ENCODE measurements at regions of chr14 and their contacts with region 1.

Region 1: GRCh38 chr14:80987235-80988032 is 32.0 kb downstream of the TSHR start:
- DNase-seq: peak; percentile 17
- H3K4me3 ChIP-seq: no peak overlapping the region
- H3K27me3 ChIP-seq: 0 out of 2 replicates have a peak, but pooled peaks cover 5% of the 10 kb centered on the region
- CTCF ChIP-seq: peak; percentile 95

Region 2: GRCh38 chr14:80954687-80955299 is 32.6 kb before region 1 on chr14:
- CTCF ChIA-PET with region 1: interaction called, 83 read pairs
- POLR2A ChIA-PET with region 1: no interaction called
- DNase-seq: peak; percentile 26
- H3K4me3 ChIP-seq: peak overlapping the region; percentile 49
- H3K27me3 ChIP-seq: peaks cover 15% of the 10 kb centered on the region
- CTCF ChIP-seq: peak; percentile 81

Region 3: GRCh38 chr14:80973931-80974641 is 13.3 kb before region 1 on chr14:
- CTCF ChIA-PET with region 1: interaction called, 34 read pairs
- POLR2A ChIA-PET with region 1: interaction called, 3 read pairs
- DNase-seq: no peak
- H3K4me3 ChIP-seq: no peak overlapping the region
- H3K27me3 ChIP-seq: 0 out of 2 replicates have a peak, but pooled peaks cover 1% of the 10 kb centered on the region
- CTCF ChIP-seq: no peak

Region 4: DNA sequence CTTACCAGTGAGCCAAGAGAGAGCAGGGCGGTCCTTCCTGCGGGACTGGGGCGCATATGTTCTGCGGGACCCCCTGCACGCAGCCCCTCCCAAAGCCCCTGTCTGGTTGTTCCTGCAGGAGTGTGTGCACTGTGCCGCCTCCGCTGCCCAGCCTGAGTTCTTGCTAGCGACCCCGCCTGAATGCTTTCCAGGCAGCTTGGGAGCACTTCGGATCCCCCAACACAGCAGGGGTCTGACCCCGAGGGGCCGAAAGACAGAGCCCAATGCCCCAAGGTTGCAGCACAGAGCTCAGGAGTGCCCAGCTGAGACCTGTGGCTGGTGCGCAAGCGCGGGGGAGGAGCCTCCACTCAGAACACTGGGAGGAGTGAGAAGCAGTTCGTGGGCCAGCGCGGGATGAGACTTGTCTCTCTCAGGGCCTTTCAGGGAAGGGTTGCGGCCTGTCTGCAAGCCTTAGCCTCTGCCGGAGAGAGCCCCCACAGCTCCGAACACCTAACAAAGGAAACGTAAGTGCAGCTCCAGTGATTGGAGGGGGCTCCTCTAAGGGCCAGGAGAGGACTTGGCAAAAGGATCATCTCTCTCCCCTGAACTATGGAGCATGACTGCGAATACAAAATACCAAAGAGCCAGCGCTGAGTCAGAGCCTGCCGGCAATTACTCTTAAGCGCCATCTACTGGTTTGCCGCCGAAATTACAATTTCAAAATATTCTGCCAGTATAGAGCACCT is 182.8 kb after region 1 on chr14:
- CTCF ChIA-PET with region 1: interaction called, 15 read pairs
- POLR2A ChIA-PET with region 1: no interaction called
- DNase-seq: peak; percentile 51
- H3K4me3 ChIP-seq: peak overlapping the region; percentile 52
- H3K27me3 ChIP-seq: no peaks in the 10 kb centered on the region
- CTCF ChIP-seq: peak; percentile 93

Region 5: GRCh38 chr14:81193924-81194633 is 206.6 kb after region 1 on chr14:
- CTCF ChIA-PET with region 1: no interaction called
- POLR2A ChIA-PET with region 1: no interaction called
- DNase-seq: no peak
- H3K4me3 ChIP-seq: no peak overlapping the region
- H3K27me3 ChIP-seq: no peaks in the 10 kb centered on the region
- CTCF ChIP-seq: no peak

Measured in BJ (cell line).